ENCODE measurements at regions of chr21 and their contacts with region 1.

Region 1: DNA sequence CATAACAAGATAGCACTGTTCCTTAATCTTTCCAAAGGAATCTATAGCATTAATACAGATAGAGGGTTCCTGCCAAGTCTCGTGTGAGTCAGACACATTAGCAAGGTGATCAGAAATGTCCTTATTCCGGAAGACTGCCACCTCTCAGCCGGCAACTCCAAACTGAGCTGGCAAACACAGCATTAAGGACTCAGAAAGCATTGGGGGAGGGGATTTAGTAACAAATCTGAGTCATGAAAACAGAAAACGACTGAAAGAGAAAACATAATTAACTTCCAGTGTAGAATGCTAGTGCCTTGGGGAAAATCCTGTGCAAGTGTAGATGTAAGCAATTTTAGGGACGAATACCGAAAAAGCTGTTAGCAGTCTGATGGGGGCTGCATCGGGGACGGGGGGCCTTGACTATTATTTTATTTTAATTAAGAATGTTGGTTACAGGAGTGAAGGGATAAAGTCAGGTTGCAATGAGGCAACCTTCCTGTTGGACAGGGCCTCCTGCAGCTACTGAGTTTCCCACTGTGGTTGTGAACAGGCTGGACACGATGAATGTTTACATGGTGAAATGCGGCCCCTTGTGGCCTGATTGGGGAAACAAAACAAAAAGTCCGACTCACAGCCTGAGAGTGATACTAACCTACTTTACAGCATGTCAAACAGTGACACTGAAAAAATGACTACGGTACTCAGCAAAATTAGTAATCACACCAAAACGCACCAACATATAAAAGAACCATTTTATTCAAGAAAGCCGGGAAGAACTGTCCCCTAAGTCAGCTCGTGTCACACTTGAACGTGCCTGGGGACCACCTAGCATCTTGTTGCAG is 20.7 kb downstream of the MIS18A start:
- DNase-seq: peak in 1 of 2 donors; percentile 46
- ATAC-seq: peak in 2 of 3 donors; percentile 29 to 64
- H3K4me3 ChIP-seq: no peak overlapping the region
- H3K4me3 Mint-ChIP-seq: no peak overlapping the region
- H3K27ac ChIP-seq: no peak overlapping the region
- H3K27ac Mint-ChIP-seq: no peak overlapping the region
- H3K4me1 ChIP-seq: no peaks in the 10 kb centered on the region
- H3K4me1 Mint-ChIP-seq: no peaks in the 10 kb centered on the region
- H3K27me3 ChIP-seq: no peaks in the 10 kb centered on the region
- H3K27me3 Mint-ChIP-seq: peaks cover 5 to 6% of the 10 kb centered on the region in 2 donors
- CTCF ChIP-seq: peak; percentile 30

Region 2: GRCh38 chr21:31866077-31866511 is 392.1 kb before region 1 on chr21:
- intact Hi-C with region 1: loop called (anchors 5 kb)
- DNase-seq: peak; percentile 28 to 71
- ATAC-seq: peak; percentile 38 to 70 (median 42)
- H3K4me3 ChIP-seq: no peak overlapping the region
- H3K4me3 Mint-ChIP-seq: no peak overlapping the region
- H3K27ac ChIP-seq: no peak overlapping the region
- H3K27ac Mint-ChIP-seq: no peak overlapping the region
- H3K4me1 ChIP-seq: no peaks in the 10 kb centered on the region
- H3K4me1 Mint-ChIP-seq: no peaks in the 10 kb centered on the region
- H3K27me3 ChIP-seq: peaks cover 3% of the 10 kb centered on the region
- H3K27me3 Mint-ChIP-seq: peaks cover 9 to 21% of the 10 kb centered on the region in 2 donors
- CTCF ChIP-seq: peak; percentile 65

Region 3: GRCh38 chr21:32329331-32329730 is 71.2 kb after region 1 on chr21:
- intact Hi-C with region 1: no loop called
- DNase-seq: no peak
- ATAC-seq: no peak
- H3K4me3 ChIP-seq: no peak overlapping the region
- H3K4me3 Mint-ChIP-seq: no peak overlapping the region
- H3K27ac ChIP-seq: no peak overlapping the region
- H3K27ac Mint-ChIP-seq: no peak overlapping the region
- H3K4me1 ChIP-seq: no peaks in the 10 kb centered on the region
- H3K4me1 Mint-ChIP-seq: peaks cover 0 to 9% of the 10 kb centered on the region in 2 donors
- H3K27me3 ChIP-seq: no peaks in the 10 kb centered on the region
- H3K27me3 Mint-ChIP-seq: no peaks in the 10 kb centered on the region
- CTCF ChIP-seq: no peak